Cardiac septum (tissue), 1 donor: ENCODE measurements at regions of chr1 and their contacts with region 1.

Region 1: GRCh38 chr1:235328357-235329138 is at the start of gene GGPS1:
- DNase-seq: peak; percentile 99
- total RNA-seq, gene GGPS1: 36.2 TPM

Region 2: GRCh38 chr1:235253219-235253962 is 75.2 kb before region 1 on chr1:
- intact Hi-C with region 1: loop called (anchors 5 kb)
- DNase-seq: no peak

Region 3: DNA sequence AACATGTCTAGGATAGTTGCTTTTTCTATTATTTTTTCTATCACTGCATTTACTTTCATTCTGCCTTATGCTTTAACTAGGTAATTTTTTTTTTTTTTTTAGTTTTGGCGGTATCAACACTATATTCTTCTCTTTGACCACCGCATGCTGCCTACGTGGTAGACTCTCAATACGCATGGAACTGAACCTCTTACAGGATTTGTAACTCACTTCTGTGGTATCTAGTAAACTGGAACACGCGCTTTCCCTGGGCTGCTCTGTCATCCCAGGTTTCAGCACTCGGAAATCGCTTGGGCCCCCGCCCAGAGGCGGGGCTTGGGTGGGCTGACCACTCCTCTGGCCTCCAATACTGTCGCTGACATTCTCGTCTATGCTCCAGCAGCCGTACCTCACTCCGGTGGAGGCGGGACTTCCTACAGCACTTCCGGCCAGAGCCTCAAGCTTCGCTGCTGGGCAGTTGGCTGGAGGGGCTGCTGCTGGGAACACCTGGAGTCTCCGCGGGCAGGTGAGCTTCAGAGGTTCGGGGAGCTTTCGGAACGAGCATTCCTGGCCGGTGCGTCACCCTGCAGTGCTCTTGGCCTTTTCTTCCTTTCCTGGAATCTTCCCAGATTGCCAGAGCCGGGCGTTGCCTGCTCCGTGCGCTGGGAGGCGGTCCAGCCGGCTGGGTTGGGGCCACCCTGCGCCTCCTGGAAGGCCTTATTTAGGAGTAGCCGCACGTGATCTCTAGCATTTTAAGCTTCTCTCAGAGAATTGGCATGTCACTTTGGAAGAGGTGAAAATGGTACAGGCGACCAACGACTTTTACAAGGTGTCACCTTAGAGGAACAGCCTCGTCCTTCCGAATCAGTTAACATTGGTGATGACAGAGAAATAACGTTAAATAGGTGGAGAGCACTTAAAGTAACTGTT is 38.7 kb after region 1 on chr1 and contains the start of gene TBCE:
- intact Hi-C with region 1: loop called (anchors 1 kb)
- DNase-seq: peak; percentile 98
- total RNA-seq, gene TBCE: 15.2 TPM